Panc1 (cell line): ENCODE measurements at regions of chrX and their contacts with region 1.

Region 1: DNA sequence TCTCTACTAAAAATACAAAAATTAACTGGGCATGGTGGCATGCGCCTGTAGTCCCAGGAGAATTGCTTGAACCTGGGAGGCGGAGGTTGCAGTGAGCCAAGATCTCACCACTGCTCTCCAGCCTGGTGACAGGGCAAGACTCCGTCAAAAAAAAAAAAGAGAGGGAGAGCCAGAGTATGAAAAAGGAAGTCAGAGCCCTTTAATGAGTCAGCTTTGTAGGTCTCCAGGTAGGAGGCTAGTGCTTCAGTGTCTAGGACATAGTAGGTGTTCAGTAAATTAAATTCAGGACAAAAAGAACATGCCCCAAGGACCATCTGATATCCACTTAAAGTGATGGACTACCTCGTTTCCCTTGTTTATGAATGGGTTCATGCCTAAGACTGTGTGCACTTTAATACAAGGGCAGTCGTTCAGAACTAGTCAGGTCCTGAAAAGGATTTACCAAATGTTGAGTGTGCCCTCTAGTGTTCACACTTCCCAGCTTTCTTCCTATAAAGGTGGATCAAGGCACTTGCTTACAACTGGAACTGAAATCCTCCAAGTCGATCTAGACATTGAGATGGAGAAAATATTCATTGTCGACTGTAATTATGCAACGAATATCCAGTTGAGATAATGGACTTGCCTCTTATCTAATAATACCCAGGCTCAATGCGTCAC is 29.0 kb downstream of the F9 start:
- DNase-seq: peak; percentile 46
- ATAC-seq: peak; percentile 89
- H3K4me3 ChIP-seq: no peak overlapping the region
- H3K27ac ChIP-seq: no peak overlapping the region
- H3K4me1 ChIP-seq: no peaks in the 10 kb centered on the region
- H3K27me3 ChIP-seq: no peaks in the 10 kb centered on the region; the same call in 1 of the 2 replicates
- CTCF ChIP-seq: peak; percentile 68

Region 2: DNA sequence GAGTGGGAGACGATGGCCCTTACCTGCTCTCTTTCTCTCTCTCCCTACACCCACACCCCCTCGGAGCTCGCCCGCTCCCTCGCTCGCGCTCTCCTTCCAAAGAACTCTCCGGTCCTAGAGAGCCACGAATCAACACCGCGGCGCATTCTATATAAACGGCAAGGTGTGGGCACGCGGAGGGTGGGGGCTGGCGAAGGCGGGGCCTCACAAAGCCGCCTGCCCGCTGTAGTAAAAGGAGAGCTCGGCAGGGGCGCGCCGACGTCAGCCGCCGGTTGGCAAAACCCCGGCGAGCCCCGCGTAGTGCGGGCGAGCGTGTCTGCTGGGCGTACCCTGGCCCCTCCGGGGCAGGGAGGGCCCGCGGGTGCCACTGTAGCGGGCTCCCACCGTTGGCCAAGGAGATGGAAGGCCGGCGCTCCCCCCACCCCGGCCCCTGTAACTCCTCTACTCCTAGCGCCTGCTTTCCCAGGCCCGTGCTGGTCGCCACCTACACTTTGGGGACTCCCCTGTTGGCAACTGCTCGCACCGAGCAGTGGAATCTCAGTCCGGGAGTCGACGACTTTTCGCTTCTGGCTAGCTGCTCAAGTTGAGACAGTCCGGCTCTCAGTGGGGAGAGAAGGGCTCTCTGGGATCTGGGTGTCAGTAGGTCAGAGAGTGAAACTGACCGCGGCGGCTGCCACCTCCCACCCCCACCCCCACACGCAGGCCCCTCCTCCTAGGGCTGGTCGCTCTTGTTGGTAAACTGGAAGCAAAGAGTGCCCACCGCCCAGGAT is 354.4 kb before region 1 on chrX:
- CTCF ChIA-PET with region 1: no interaction called
- POLR2A ChIA-PET with region 1: no interaction called
- in situ Hi-C with region 1: no loop called
- intact Hi-C with region 1: loop called (anchors 10 kb)
- DNase-seq: no peak
- ATAC-seq: peak; percentile 65
- H3K4me3 ChIP-seq: peak overlapping the region; percentile 36 to 57
- H3K27ac ChIP-seq: no peak overlapping the region
- H3K4me1 ChIP-seq: no peaks in the 10 kb centered on the region; the same call in 1 of the 2 replicates
- H3K27me3 ChIP-seq: peaks cover 26% of the 10 kb centered on the region
- CTCF ChIP-seq: no peak

Region 3: GRCh38 chrX:139596068-139596467 is 36.6 kb after region 1 on chrX:
- CTCF ChIA-PET with region 1: no interaction called
- POLR2A ChIA-PET with region 1: no interaction called
- in situ Hi-C with region 1: no loop called
- intact Hi-C with region 1: no loop called
- DNase-seq: no peak
- ATAC-seq: no peak
- H3K4me3 ChIP-seq: no peak overlapping the region
- H3K27ac ChIP-seq: no peak overlapping the region
- H3K4me1 ChIP-seq: no peaks in the 10 kb centered on the region
- H3K27me3 ChIP-seq: no peaks in the 10 kb centered on the region
- CTCF ChIP-seq: no peak